Activated CD8-positive, alpha-beta T cell treated with anti-CD3 and anti-CD28 coated beads, Interleukin-2, amount 10 ng/mL, durations not matched to agents 7 days and 5 days (primary cell): ENCODE measurements at regions of chr14 and their contacts with region 1.

Region 1: GRCh38 chr14:76876076-76876475 is 49.9 kb downstream of the LRRC74A start:
- DNase-seq: peak; percentile 63
- ATAC-seq: peak; percentile 76
- H3K4me3 Mint-ChIP-seq: no peak overlapping the region
- H3K27ac Mint-ChIP-seq: no peak overlapping the region
- H3K4me1 Mint-ChIP-seq: peaks cover 2% of the 10 kb centered on the region
- H3K27me3 Mint-ChIP-seq: no peaks in the 10 kb centered on the region

Region 2: GRCh38 chr14:76820700-76821099 is 55.4 kb before region 1 on chr14:
- CTCF ChIA-PET with region 1: no interaction called
- POLR2A ChIA-PET with region 1: no interaction called
- DNase-seq: no peak
- ATAC-seq: no peak
- H3K4me3 Mint-ChIP-seq: no peak overlapping the region
- H3K27ac Mint-ChIP-seq: no peak overlapping the region
- H3K4me1 Mint-ChIP-seq: no peaks in the 10 kb centered on the region
- H3K27me3 Mint-ChIP-seq: peaks cover 12% of the 10 kb centered on the region

Region 3: GRCh38 chr14:76863724-76864407 is 12.2 kb before region 1 on chr14:
- CTCF ChIA-PET with region 1: interaction called, 21 read pairs
- POLR2A ChIA-PET with region 1: no interaction called
- DNase-seq: no peak
- ATAC-seq: no peak
- H3K4me3 Mint-ChIP-seq: no peak overlapping the region
- H3K27ac Mint-ChIP-seq: no peak overlapping the region
- H3K4me1 Mint-ChIP-seq: peaks cover 28% of the 10 kb centered on the region
- H3K27me3 Mint-ChIP-seq: peaks cover 15% of the 10 kb centered on the region

Region 4: GRCh38 chr14:76911473-76911872 is 35.4 kb after region 1 on chr14:
- CTCF ChIA-PET with region 1: interaction called, 44 read pairs
- POLR2A ChIA-PET with region 1: no interaction called
- DNase-seq: no peak
- ATAC-seq: no peak
- H3K4me3 Mint-ChIP-seq: no peak overlapping the region
- H3K27ac Mint-ChIP-seq: peak overlapping the region; percentile 64
- H3K4me1 Mint-ChIP-seq: peaks cover 66% of the 10 kb centered on the region
- H3K27me3 Mint-ChIP-seq: no peaks in the 10 kb centered on the region

Region 5: GRCh38 chr14:77053046-77053841 is 177.2 kb after region 1 on chr14:
- CTCF ChIA-PET with region 1: interaction called, 101 read pairs
- POLR2A ChIA-PET with region 1: interaction called, 3 read pairs
- DNase-seq: peak; percentile 85
- ATAC-seq: peak; percentile 96
- H3K4me3 Mint-ChIP-seq: no peak overlapping the region
- H3K27ac Mint-ChIP-seq: peak overlapping the region; percentile 68
- H3K4me1 Mint-ChIP-seq: peaks cover 28% of the 10 kb centered on the region
- H3K27me3 Mint-ChIP-seq: no peaks in the 10 kb centered on the region

Region 6: DNA sequence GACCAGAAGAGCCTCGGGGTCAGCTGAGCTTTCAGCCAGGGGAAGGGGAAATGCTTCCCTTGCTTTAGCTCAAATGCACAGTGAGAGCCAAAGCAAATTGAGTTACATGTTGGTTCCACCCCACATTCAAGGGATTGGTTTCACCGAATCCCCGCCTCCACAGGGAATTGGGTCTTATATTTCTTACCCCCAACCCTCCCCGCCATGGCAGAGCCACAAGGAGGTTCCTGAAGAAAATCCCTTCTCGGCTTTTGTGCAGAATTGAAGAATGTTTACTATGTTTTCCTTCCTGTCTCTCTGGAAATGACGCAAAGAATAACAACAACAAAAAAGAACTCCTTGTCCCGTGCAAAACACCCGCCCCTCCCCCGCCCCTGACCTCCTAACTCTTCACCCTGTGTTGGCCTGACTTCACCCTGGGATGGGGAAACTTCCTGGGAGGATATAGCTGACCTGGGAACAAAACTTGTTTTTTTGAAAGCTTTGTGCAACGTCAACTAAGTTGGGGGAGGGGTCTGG is 200.1 kb after region 1 on chr14:
- CTCF ChIA-PET with region 1: interaction called, 371 read pairs
- POLR2A ChIA-PET with region 1: no interaction called
- DNase-seq: no peak
- ATAC-seq: no peak
- H3K4me3 Mint-ChIP-seq: no peak overlapping the region
- H3K27ac Mint-ChIP-seq: no peak overlapping the region
- H3K4me1 Mint-ChIP-seq: no peaks in the 10 kb centered on the region
- H3K27me3 Mint-ChIP-seq: no peaks in the 10 kb centered on the region

Region 7: DNA sequence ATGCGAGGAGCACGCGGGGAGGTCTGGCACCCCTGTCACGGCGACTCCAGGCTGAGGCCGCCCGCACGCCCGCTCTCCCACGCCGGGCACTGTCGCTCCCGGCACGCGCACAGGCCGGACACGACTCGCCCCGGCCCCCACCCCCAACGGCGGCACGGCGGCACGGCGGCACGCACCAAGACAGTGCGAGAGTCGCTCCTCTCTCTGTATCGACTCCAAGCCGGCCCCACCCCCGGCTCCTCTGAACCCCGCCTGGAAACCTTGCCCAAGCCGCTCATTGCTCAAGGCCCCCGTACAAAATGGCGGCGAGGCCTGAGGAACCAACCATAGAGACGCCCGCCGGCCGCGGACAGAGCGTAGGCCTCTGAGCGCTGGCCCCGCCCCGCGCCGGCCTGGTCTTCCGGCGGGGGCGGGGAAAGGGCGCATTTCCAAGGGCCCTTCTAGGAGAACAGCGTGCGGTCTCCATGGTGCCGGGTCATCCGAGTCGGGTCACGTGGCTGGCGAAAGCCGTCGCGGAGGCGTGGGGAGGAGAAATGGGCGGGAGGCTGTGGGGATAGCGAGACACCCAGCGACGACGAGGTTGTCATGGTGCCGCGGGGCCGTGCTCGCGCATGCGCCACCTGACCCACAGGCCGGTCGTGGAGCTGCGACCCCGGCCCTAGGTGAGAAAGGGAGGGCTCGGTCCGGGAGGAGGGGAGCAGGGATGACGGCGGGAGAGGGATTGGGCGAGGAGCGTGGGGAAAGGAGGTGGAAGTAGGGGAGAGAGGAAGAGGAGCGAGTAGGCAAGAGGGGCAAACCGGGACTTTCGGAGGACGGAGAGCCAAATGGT is 221.8 kb after region 1 on chr14 and contains the start of gene CIPC:
- CTCF ChIA-PET with region 1: interaction called, 41 read pairs
- POLR2A ChIA-PET with region 1: no interaction called
- DNase-seq: peak; percentile 100
- ATAC-seq: peak; percentile 94
- H3K4me3 Mint-ChIP-seq: peak within 1 kb of the TSS; percentile 84
- H3K27ac Mint-ChIP-seq: peak within 1 kb of the TSS; percentile 93
- H3K4me1 Mint-ChIP-seq: peaks cover 31% of the 10 kb centered on the region
- H3K27me3 Mint-ChIP-seq: peaks cover 4% of the 10 kb centered on the region
- total RNA-seq, gene CIPC: 11.4 to 11.7 TPM